Body of pancreas (tissue), 4 donors: ENCODE measurements at regions of chr17 and their contacts with region 1.

Region 1: GRCh38 chr17:50550661-50551432 is 3.9 kb downstream of the SPATA20 start:
- DNase-seq: peak; percentile 74 to 87 (median 84)
- ATAC-seq: peak; percentile 57
- H3K4me3 ChIP-seq: no peak overlapping the region
- H3K27ac ChIP-seq: no peak overlapping the region
- H3K4me1 ChIP-seq: peaks cover 30% of the 10 kb centered on the region
- H3K27me3 ChIP-seq: no peaks in the 10 kb centered on the region
- CTCF ChIP-seq: peak; percentile 47 to 86 (median 70)
- POLR2A ChIP-seq: peak in 1 of 3 donors; percentile 10

Region 2: DNA sequence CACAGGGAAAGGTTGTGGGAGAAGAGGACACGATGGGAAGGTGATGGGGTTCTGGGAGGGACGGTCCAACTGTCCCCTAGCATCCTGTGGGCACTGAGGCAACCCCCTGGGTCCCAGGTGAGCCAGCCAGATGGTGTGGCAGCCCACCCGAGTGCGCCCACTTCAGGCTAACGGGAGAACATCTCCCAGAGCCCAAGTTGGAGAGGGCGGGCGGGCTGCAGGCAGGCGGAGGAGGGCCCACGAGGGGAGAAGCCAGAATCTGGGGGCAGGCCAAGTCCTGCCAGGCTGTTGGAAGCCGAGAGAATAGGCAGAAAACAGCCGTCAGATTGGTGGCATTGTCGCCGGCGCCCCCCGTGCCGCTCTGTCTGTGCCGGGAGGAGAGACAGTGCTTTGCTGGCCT is 70.0 kb after region 1 on chr17:
- intact Hi-C with region 1: loop called (anchors 5 kb)
- DNase-seq: no peak
- ATAC-seq: no peak
- H3K4me3 ChIP-seq: no peak overlapping the region
- H3K27ac ChIP-seq: no peak overlapping the region
- H3K4me1 ChIP-seq: peaks cover under 1% of the 10 kb centered on the region
- H3K27me3 ChIP-seq: no peaks in the 10 kb centered on the region
- CTCF ChIP-seq: no peak
- POLR2A ChIP-seq: no peak

Region 3: DNA sequence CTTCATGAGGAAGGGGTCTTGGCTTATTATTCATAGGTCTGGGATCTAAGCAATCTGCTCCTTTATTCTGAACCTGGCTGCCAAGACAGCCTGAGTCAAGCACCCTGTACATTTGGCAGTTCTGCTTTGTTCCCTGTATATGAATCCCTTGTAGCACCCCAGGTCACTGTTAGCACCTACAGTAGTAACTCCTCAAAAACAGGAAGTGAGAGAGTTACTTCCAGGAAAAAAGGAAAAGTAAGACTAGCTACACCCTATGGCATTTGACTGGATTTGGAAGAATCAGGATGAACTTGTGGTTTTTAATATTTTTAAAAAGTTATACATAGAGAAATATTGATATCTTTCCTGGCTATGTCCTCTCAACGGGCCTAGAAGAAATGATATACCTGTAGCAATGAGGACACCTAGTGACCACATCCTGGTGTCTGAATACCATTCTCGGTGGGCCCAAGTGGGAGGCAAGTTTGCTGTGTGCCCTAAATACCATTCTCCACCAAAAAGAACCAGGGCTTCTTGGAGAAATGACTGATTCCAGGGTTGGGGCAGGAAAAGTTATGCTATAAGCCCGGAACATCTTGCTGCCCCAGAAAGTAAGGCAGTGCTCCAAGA is 146.9 kb after region 1 on chr17:
- intact Hi-C with region 1: loop called (anchors 5 kb)
- DNase-seq: no peak
- ATAC-seq: no peak
- H3K4me3 ChIP-seq: no peak overlapping the region
- H3K27ac ChIP-seq: peak overlapping the region; percentile 28 to 93 (median 72)
- H3K4me1 ChIP-seq: peaks cover 50% of the 10 kb centered on the region
- H3K27me3 ChIP-seq: no peaks in the 10 kb centered on the region
- CTCF ChIP-seq: peak in 4 of 7 experiments; percentile 30 to 41 (median 37)
- POLR2A ChIP-seq: no peak

Region 4: DNA sequence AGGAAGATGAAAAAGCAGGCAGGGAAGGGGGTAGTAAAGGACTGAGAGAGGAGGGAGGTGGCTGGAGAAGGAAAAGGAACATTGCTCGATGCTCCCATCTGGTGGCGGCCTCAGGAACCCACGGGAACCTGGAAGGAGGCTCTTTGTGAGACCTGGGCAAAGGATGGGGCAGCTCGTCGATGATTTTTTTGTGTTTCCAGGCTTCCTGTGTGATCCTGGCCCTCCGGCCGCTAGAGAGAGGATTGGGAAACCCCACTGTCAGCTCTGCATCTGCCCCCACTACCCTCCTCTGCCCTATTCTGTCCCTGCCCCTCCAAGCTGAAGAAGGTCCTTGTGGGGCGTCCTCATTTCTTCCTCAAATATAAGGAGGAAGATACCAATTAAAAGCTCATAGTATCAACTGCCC is 291.1 kb after region 1 on chr17:
- intact Hi-C with region 1: loop called (anchors 10 kb)
- DNase-seq: peak; percentile 75 to 82 (median 79)
- ATAC-seq: peak; percentile 89
- H3K4me3 ChIP-seq: no peak overlapping the region
- H3K27ac ChIP-seq: no peak overlapping the region
- H3K4me1 ChIP-seq: peaks cover 6% of the 10 kb centered on the region
- H3K27me3 ChIP-seq: no peaks in the 10 kb centered on the region
- CTCF ChIP-seq: peak; percentile 61 to 96 (median 86)
- POLR2A ChIP-seq: no peak